Sciatic nerve (tissue), 2 donors: ENCODE measurements at regions of chr11 and their contacts with region 1.

Region 1: GRCh38 chr11:60700689-60701480 is 1.5 kb downstream of the MS4A8 start:
- DNase-seq: no peak
- ATAC-seq: no peak

Region 2: GRCh38 chr11:60657888-60658287 is 43.0 kb before region 1 on chr11:
- intact Hi-C with region 1: no loop called
- DNase-seq: no peak
- ATAC-seq: no peak

Region 3: DNA sequence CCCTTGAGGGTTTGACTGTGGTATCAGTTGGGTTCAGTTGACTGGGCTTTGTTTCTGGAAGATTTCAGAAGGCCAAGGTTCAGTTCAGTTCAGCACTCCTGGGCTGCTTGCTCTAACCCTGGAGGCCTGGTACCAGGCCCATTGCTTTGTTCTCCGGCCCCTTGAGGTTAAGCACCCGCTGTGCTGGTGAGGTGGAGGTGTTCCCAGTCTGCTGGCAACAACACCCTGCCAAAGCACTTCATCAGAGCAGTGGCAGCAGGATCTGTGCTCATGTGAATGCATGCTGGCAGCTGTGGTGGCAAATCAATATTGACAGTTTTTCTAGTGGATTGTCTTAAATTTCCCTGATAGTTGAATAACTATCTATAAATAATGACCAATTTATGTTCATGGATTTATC is 1485.3 kb after region 1 on chr11:
- intact Hi-C with region 1: loop called (anchors 5 kb)
- DNase-seq: no peak
- ATAC-seq: no peak